ENCODE measurements at regions of chr6 and their contacts with region 1.

Region 1: GRCh38 chr6:112043032-112044007 is 10.6 kb upstream of the CCN6 start:
- DNase-seq: peak; percentile 33
- H3K4me3 ChIP-seq: peak overlapping the region; percentile 62
- CTCF ChIP-seq: peak; percentile 95

Region 2: DNA sequence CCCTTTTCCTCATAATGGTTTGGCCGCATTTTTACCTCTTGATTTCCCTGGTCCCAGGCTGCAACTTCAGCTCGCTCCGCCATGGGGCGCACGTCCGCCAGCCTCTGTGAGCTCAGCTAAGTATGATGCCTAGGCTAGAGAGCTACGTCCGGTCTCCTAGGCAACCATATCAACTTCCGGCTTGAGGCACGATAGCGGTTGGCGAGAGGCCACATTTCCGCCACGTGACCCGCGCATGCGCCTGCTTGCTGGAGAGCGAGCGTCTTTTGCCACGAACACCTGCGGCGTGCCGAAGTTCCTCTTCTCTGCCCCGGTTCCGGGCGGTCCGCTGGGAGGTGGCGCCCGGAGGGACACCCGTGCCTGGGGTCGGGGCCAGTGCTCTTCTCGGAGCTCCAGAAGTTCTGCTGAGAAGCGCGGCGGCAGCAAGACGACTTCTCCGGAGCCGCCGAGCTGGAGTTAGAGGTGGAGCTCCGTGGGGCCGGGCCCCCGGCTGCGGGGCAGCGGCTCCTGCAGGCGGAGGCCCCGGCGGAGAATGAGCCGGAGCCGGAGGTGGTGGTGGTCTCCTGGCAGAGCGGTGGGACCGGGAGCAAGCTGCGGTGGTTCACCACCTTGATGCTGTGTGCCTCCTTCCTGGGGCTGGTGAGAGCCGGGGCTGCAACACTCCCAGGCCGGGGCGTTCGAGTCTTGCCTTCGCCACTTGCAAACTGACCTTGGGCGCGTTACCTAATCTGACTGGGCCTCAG is 784.1 kb before region 1 on chr6:
- CTCF ChIA-PET with region 1: interaction called, 16 read pairs
- POLR2A ChIA-PET with region 1: no interaction called
- DNase-seq: peak; percentile 94
- H3K4me3 ChIP-seq: peak overlapping the region; percentile 85
- CTCF ChIP-seq: peak; percentile 87

Region 3: DNA sequence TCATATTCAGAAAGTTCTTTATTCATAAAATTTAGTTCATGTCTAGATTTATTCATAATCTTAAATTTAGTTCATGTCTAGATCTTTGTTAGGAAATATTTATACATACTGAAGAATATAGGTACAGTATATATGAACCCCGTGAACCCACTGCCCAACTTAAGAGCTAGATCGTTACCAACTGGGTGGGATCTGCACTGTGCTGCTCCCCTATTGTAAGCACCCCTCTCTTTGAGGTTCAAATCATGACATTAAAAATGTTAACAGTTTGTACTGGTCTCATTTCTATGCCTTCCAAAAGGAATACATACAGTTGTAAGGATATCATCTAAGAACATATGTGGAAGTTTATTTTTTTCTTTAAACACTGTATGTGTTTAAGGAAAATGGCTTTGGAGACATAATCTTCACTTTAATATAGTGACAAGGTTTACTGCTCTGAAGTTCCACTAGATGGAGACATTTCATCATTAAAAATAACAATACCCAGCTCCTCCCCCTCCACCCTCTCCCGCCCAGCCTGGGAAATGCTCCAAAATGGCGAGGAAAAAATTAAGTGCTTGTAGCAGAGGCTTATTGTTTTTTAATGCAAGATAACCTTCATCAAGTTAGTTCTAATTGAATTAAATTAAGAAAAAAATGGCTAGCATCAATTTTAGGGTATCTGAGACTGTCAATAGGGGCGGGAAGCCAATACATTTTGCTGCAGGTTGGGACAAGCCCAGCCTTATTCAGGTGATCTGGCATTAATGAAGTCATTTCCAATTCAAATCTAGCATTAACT is 333.5 kb before region 1 on chr6:
- CTCF ChIA-PET with region 1: interaction called, 253 read pairs
- POLR2A ChIA-PET with region 1: interaction called, 8 read pairs
- DNase-seq: no peak
- H3K4me3 ChIP-seq: no peak overlapping the region
- CTCF ChIP-seq: peak; percentile 41

Region 4: GRCh38 chr6:111753573-111753972 is 289.7 kb before region 1 on chr6:
- CTCF ChIA-PET with region 1: interaction called, 10 read pairs
- POLR2A ChIA-PET with region 1: no interaction called
- DNase-seq: no peak
- H3K4me3 ChIP-seq: no peak overlapping the region
- CTCF ChIP-seq: no peak

Region 5: DNA sequence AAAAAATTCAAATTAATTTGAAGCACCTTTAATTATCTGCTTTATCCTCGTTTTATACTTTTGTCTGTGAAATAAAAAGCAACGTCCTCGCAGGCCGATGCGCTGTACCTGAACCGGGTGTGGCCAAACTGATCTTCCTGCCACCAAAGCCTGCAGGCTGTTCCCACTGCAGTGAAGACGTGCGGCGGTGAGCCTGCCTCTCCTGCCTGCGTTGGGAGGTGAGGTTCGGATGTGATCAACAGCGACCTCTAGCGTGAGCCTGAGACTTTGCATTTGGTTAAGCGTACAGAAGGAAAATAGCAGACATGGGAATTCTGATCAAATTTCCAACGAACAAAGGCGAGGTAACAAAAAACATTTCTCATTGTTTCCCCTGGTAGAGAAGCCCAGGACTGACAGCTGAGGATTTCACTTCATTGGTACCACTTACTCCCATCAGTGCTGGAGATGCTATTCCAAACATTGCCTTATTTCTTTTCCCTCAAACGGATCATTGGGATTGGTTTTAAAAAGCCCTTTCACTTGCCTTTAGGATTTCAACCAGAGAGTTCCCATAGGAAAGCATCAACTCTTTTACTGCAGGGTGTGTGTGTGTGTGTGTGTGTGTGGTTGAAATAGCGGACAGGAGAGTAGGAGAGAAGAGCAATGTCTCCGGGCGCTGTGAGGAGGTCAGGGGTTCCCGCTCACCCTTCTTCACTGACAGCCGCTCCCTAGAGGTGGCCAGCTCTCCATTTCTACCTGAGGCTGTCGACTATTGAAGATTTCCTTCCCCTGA is 46.1 kb before region 1 on chr6:
- CTCF ChIA-PET with region 1: interaction called, 42 read pairs
- POLR2A ChIA-PET with region 1: no interaction called
- DNase-seq: no peak
- H3K4me3 ChIP-seq: no peak overlapping the region
- CTCF ChIP-seq: peak; percentile 83

Region 6: GRCh38 chr6:112018619-112019416 is 24.5 kb before region 1 on chr6:
- CTCF ChIA-PET with region 1: interaction called, 28 read pairs
- POLR2A ChIA-PET with region 1: no interaction called
- DNase-seq: no peak
- H3K4me3 ChIP-seq: no peak overlapping the region
- CTCF ChIP-seq: no peak

Region 7: GRCh38 chr6:112054555-112055160 is 11.3 kb after region 1 on chr6:
- CTCF ChIA-PET with region 1: interaction called, 14 read pairs
- POLR2A ChIA-PET with region 1: interaction called, 3 read pairs
- DNase-seq: no peak
- H3K4me3 ChIP-seq: no peak overlapping the region
- CTCF ChIP-seq: no peak

Region 8: DNA sequence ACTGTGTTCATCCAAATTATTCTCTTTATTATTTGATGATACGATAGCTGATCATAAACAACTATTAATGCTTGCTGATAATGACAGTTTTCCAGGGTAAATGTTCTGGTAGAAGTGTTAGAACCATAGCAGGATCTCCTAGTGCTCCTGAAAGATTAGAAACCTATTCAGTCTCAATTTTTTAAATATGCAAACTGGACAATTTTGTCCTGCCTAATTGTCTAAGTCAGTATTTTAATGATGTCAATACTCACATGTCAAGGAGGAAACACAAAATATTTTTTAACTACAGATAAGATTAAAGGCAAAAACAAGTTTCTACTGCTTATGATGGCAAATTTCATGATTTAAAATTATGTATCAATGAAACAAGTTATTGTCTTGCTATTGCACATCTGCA is 537.7 kb after region 1 on chr6:
- CTCF ChIA-PET with region 1: no interaction called
- POLR2A ChIA-PET with region 1: no interaction called
- DNase-seq: no peak
- H3K4me3 ChIP-seq: no peak overlapping the region
- CTCF ChIP-seq: no peak